B cell (primary cell): ENCODE measurements at regions of chr7 and their contacts with region 1.

Region 1: GRCh38 chr7:22565315-22565811 is 65.4 kb upstream of the STEAP1B start:
- DNase-seq: peak; percentile 74
- ATAC-seq: peak; percentile 66
- H3K4me3 ChIP-seq: no peak overlapping the region
- H3K4me3 Mint-ChIP-seq: peak overlapping the region; percentile 51
- H3K27ac ChIP-seq: peak overlapping the region; percentile 27 to 65
- H3K27ac Mint-ChIP-seq: peak overlapping the region; percentile 79
- H3K4me1 ChIP-seq: peaks cover 57 to 66% of the 10 kb centered on the region in 2 donors
- H3K4me1 Mint-ChIP-seq: peaks cover 67% of the 10 kb centered on the region
- H3K27me3 ChIP-seq: no peaks in the 10 kb centered on the region
- H3K27me3 Mint-ChIP-seq: no peaks in the 10 kb centered on the region
- CTCF ChIP-seq: no peak

Region 2: DNA sequence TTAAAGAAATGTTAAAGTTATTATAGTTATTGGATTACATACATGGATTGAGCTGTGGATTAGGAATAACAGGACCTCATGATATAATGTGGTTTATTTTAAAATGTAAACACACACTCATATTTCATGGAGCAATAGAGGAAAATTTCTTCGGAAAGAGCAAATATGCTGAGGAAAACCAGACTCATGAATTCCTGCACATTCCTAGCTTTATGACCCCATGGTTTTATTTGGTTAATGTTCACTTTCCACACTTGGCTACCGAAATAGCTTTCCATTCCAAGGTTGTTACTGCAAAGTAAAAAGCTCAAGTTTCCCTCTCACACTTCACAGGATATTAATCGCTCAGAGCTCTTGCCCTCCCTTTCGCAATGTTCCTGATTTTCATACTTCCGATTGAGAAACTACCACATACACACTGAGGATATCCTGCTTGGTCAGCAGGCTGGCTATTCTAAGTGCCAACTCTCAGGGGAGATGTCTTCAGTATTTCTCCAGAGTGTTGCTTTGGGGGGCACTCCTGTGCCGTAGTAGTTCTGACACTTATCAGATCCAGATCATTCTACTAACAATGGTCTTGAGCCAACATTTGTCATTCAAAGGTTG is 12.1 kb after region 1 on chr7:
- CTCF ChIA-PET with region 1: interaction called, 48 read pairs
- POLR2A ChIA-PET with region 1: no interaction called
- intact Hi-C with region 1: loop called (anchors 2 kb)
- DNase-seq: no peak
- ATAC-seq: peak; percentile 33
- H3K4me3 ChIP-seq: no peak overlapping the region
- H3K4me3 Mint-ChIP-seq: peak overlapping the region; percentile 66
- H3K27ac ChIP-seq: no peak overlapping the region
- H3K27ac Mint-ChIP-seq: peak overlapping the region; percentile 51
- H3K4me1 ChIP-seq: peaks cover 16% of the 10 kb centered on the region in 2 donors
- H3K4me1 Mint-ChIP-seq: peaks cover 29% of the 10 kb centered on the region
- H3K27me3 ChIP-seq: no peaks in the 10 kb centered on the region
- H3K27me3 Mint-ChIP-seq: no peaks in the 10 kb centered on the region
- CTCF ChIP-seq: no peak